ENCODE measurements at regions of chr17 and their contacts with region 1.

Region 1: GRCh38 chr17:72725433-72726068 is 366.9 kb downstream of the SLC39A11 start:
- DNase-seq: peak; percentile 48
- H3K27ac ChIP-seq: no peak overlapping the region
- CTCF ChIP-seq: peak; percentile 98

Region 2: DNA sequence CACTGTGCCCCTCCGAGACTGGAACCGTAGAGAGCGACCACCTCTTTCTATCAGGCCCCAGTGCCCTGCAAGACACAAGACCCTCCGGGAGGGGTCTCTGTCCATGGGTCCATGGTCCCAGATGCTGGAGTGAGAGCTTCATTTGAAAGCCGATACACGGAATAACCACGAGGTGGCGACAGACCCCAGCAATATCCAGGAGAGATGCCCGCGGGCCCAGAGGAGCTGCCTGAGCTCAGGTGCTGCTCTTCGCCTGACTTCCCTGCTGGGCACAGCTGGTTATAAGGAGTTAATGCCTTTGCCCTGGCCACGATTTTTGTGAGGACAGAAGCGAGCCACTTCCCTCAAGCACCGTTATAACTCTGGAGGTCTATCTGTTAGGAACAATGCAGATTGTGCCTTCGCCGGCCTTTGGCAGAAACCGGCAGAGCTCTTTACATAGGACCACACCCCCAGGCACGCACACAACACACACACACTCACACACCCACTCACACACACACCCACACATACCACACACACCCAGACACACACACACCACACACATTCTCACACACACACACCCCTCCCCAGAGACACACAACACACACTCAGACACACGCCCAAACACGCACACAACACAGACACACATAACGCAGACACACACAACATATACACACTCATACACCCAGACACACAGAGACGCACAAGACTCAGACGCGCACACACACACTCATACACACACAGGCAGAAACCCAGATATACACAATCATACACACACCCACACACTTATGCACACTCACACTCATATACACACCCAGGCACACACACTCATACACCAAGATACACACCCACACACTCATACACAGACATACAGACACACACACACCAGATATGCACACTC is 168.4 kb before region 1 on chr17:
- CTCF ChIA-PET with region 1: interaction called, 74 read pairs
- POLR2A ChIA-PET with region 1: interaction called, 3 read pairs
- DNase-seq: peak; percentile 72
- H3K27ac ChIP-seq: peak overlapping the region; percentile 57
- CTCF ChIP-seq: peak; percentile 87

Region 3: DNA sequence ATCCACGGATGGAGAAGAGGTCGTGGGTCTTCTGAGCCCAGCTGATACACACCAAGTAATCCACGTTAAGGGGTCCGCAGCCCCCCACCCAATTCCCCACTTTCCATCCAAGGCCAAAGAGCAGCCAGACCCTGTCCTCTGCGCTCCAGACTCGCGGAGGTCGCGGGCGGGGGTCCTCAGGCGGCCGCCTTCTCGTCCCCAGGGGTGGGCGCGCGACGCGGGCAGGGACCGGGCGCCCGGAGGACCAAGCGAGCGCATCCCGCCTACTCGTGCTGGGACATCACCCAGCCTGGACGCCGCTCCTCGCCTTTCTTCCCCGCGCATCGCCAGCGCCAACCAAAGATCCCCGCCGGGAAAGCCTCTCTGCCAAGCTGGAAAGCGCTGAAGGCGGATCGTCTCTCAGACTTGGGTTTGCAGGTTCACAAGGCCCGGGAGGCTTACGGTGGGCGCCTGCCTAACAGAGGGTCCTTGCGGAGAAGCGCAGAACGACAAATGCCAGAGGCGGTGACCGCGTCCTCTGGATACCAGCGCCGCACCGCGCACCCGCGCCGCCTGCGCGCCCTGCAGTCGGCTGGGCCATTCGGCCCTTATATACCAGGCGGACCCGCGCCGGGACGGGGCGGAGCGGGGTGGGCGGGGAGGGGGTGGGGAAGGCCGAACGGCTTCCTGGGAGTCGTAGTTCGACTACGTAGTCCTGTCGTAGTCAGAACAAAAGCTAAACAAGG is 133.1 kb before region 1 on chr17:
- CTCF ChIA-PET with region 1: interaction called, 10 read pairs
- POLR2A ChIA-PET with region 1: no interaction called
- DNase-seq: peak; percentile 95
- H3K27ac ChIP-seq: peak overlapping the region; percentile 98
- CTCF ChIP-seq: no peak

Region 4: GRCh38 chr17:72707881-72708280 is 17.7 kb before region 1 on chr17:
- CTCF ChIA-PET with region 1: no interaction called
- POLR2A ChIA-PET with region 1: no interaction called
- DNase-seq: no peak
- H3K27ac ChIP-seq: no peak overlapping the region
- CTCF ChIP-seq: no peak

Region 5: GRCh38 chr17:73156166-73156840 is 430.8 kb after region 1 on chr17:
- CTCF ChIA-PET with region 1: interaction called, 15 read pairs
- POLR2A ChIA-PET with region 1: no interaction called
- DNase-seq: peak; percentile 76
- H3K27ac ChIP-seq: no peak overlapping the region
- CTCF ChIP-seq: peak; percentile 70

Region 6: DNA sequence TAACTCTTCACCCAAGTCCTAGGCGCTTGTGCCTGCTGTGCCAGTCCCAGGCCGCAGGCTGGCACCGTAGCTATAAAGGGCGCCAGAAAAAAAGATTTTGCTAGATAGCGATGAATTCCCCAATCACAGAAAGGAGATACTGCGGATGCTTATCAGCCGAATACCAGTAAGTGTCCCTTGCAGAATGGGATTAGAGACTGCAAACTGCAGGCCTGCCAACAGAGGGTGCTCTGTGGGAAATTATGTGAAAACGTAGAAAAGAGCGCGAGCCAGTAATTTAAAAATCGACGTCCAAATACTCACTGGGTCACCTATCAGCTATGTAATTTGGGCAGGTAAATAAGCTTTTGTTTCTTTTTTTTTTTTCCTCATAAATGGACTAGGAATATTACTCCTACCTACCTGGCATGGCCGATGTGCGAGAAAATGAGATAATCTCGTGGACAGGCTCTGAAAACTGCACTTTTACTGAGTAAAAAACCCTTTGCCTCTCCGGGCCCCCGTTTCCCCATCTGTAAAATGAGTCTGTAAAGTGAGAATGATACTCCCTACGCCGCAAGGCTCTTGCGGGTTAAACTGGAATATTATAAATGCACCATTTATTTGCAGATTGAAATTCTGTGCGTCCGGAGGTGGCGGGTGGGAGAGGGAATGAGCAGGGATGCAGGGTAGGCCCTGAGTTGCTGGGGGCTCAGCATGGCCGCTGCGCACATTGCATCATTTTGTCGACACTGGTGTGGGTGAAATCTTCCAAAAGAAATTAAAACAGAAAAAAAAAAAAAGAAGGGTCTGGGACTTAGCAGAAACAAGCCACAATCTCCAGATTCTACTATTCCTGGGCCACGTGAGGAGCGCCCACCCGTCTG is 466.1 kb after region 1 on chr17:
- CTCF ChIA-PET with region 1: interaction called, 44 read pairs
- POLR2A ChIA-PET with region 1: no interaction called
- DNase-seq: peak; percentile 71
- H3K27ac ChIP-seq: peak overlapping the region; percentile 99
- CTCF ChIP-seq: peak; percentile 97